CD4-positive, alpha-beta T cell (primary cell): ENCODE measurements at regions of chr17 and their contacts with region 1.

Region 1: DNA sequence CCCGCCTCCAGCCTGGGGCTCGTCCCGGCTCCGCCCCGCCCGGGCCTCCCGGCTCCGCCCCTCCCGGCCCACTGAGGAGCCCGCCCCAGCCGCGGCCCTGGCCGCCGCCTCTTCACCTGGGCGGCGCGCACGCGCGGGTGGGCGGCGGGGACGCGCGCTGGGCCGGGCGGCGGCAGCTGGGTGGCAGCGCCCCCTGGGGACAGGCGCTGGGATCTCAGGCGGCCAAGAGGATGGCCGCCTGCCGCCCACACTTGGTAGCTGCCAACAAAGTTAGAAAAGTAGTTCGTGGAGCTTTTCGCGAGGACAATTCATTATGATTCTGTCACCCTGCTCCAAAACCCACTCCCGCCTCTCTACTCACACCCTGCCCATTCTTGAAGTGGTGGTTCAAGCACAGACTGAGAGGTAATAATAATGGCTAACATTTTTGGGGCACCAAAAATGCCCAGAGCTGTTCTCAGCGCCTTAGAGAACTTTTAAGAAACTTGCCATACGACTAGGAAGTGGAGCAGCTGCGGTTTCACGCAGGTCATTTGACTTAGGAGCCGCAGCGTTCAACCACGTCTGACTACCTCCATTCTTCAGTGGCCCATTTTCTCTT is 340 bp upstream of the MYO1D start:
- DNase-seq: peak; percentile 81 to 98 (median 92)
- ATAC-seq: peak; percentile 93
- H3K4me3 ChIP-seq: peak overlapping the region; percentile 36
- H3K4me3 Mint-ChIP-seq: peak overlapping the region; percentile 92
- H3K27ac ChIP-seq: peak overlapping the region; percentile 41 to 63
- H3K27ac Mint-ChIP-seq: peak overlapping the region; percentile 80
- H3K4me1 ChIP-seq: peaks cover 11% of the 10 kb centered on the region
- H3K4me1 Mint-ChIP-seq: peaks cover 14% of the 10 kb centered on the region
- H3K27me3 ChIP-seq: no peaks in the 10 kb centered on the region
- H3K27me3 Mint-ChIP-seq: peaks cover 5% of the 10 kb centered on the region
- CTCF ChIP-seq: peak; percentile 69

Region 2: GRCh38 chr17:32341857-32342602 is 535.2 kb before region 1 on chr17 and contains the start of gene C17orf75:
- CTCF ChIA-PET with region 1: no interaction called
- POLR2A ChIA-PET with region 1: no interaction called
- intact Hi-C with region 1: loop called in 1 of 2 experiments (anchors 5 kb)
- DNase-seq: peak; percentile 69 to 87 (median 78)
- ATAC-seq: peak; percentile 92
- H3K4me3 ChIP-seq: peak within 1 kb of the TSS; percentile 67
- H3K4me3 Mint-ChIP-seq: peak within 1 kb of the TSS; percentile 99
- H3K27ac ChIP-seq: peak within 1 kb of the TSS; percentile 58 to 62
- H3K27ac Mint-ChIP-seq: peak within 1 kb of the TSS; percentile 91
- H3K4me1 ChIP-seq: peaks cover 19% of the 10 kb centered on the region
- H3K4me1 Mint-ChIP-seq: peaks cover 28% of the 10 kb centered on the region
- H3K27me3 ChIP-seq: no peaks in the 10 kb centered on the region
- H3K27me3 Mint-ChIP-seq: no peaks in the 10 kb centered on the region
- CTCF ChIP-seq: no peak
- total RNA-seq, gene C17orf75: 12.8 to 15.9 TPM

Region 3: GRCh38 chr17:32444308-32445073 is 432.8 kb before region 1 on chr17 and contains the start of gene PSMD11:
- CTCF ChIA-PET with region 1: interaction called, 17 read pairs
- POLR2A ChIA-PET with region 1: interaction called, 7 read pairs
- intact Hi-C with region 1: loop called in 1 of 2 experiments (anchors 5 kb)
- DNase-seq: peak; percentile 98 to 99 (median 99)
- ATAC-seq: peak; percentile 97
- H3K4me3 ChIP-seq: peak within 1 kb of the TSS; percentile 92
- H3K4me3 Mint-ChIP-seq: peak within 1 kb of the TSS; percentile 90
- H3K27ac ChIP-seq: peak within 1 kb of the TSS; percentile 46 to 63
- H3K27ac Mint-ChIP-seq: peak within 1 kb of the TSS; percentile 18
- H3K4me1 ChIP-seq: peaks cover 17% of the 10 kb centered on the region
- H3K4me1 Mint-ChIP-seq: peaks cover 39% of the 10 kb centered on the region
- H3K27me3 ChIP-seq: no peaks in the 10 kb centered on the region
- H3K27me3 Mint-ChIP-seq: no peaks in the 10 kb centered on the region
- CTCF ChIP-seq: peak; percentile 23
- total RNA-seq, gene PSMD11: 67.6 to 68.7 TPM

Region 4: GRCh38 chr17:32486111-32486700 is 391.1 kb before region 1 on chr17:
- CTCF ChIA-PET with region 1: interaction called, 3 read pairs
- POLR2A ChIA-PET with region 1: interaction called, 3 read pairs
- intact Hi-C with region 1: loop called (anchors 10 kb)
- DNase-seq: peak; percentile 51 to 93 (median 68)
- ATAC-seq: peak; percentile 72
- H3K4me3 ChIP-seq: peak overlapping the region; percentile 38
- H3K4me3 Mint-ChIP-seq: peak overlapping the region; percentile 90
- H3K27ac ChIP-seq: peak overlapping the region; percentile 21
- H3K27ac Mint-ChIP-seq: peak overlapping the region; percentile 62
- H3K4me1 ChIP-seq: peaks cover 42% of the 10 kb centered on the region
- H3K4me1 Mint-ChIP-seq: peaks cover 55% of the 10 kb centered on the region
- H3K27me3 ChIP-seq: no peaks in the 10 kb centered on the region
- H3K27me3 Mint-ChIP-seq: no peaks in the 10 kb centered on the region
- CTCF ChIP-seq: no peak

Region 5: DNA sequence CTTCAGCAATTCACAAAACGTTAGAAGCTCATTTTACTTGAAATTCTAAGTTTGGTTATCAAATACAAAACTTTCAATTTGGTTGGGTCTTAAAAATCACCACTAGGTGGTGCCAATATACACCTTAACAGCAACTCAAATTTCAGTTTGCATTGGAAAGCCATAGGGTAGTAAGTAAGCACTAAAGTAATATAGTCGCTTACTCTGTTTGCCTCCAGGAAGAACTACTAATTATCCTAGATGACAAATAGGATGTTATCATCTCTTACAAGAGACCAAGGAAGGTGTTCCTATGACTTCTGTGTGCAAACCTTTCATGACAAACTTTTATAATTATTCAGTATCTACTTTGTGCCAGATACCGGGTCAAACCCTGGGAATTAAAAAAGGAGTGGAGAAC is 93.7 kb before region 1 on chr17:
- CTCF ChIA-PET with region 1: interaction called, 79 read pairs
- POLR2A ChIA-PET with region 1: interaction called, 13 read pairs
- intact Hi-C with region 1: loop called (anchors 1 kb)
- DNase-seq: peak in 3 of 14 experiments; percentile 64 to 67 (median 67)
- ATAC-seq: peak; percentile 52
- H3K4me3 ChIP-seq: no peak overlapping the region
- H3K4me3 Mint-ChIP-seq: no peak overlapping the region
- H3K27ac ChIP-seq: no peak overlapping the region
- H3K27ac Mint-ChIP-seq: no peak overlapping the region
- H3K4me1 ChIP-seq: no peaks in the 10 kb centered on the region
- H3K4me1 Mint-ChIP-seq: no peaks in the 10 kb centered on the region
- H3K27me3 ChIP-seq: no peaks in the 10 kb centered on the region
- H3K27me3 Mint-ChIP-seq: no peaks in the 10 kb centered on the region
- CTCF ChIP-seq: peak; percentile 86

Region 6: DNA sequence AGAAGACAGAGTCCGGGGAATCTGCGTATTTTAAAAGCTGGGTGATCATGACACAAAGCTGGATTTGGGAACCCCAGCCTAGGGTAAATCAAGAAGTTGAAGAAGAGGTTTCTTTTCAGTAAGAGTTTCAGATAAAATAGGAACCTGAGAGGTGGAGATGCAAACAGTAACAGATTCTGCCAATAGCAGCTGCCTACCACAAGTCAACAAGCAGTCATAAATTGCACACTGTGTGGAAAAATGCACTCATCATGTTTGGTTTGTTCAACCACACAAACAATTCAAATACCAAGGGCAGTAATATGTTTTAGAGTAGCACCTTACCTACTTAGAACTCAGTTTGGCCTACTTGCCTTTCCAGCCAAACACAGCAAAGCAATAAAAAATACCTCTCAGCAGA is 14.3 kb before region 1 on chr17:
- CTCF ChIA-PET with region 1: interaction called, 12 read pairs
- POLR2A ChIA-PET with region 1: no interaction called
- intact Hi-C with region 1: no loop called
- DNase-seq: no peak
- ATAC-seq: no peak
- H3K4me3 ChIP-seq: no peak overlapping the region
- H3K4me3 Mint-ChIP-seq: no peak overlapping the region
- H3K27ac ChIP-seq: no peak overlapping the region
- H3K27ac Mint-ChIP-seq: no peak overlapping the region
- H3K4me1 ChIP-seq: no peaks in the 10 kb centered on the region
- H3K4me1 Mint-ChIP-seq: no peaks in the 10 kb centered on the region
- H3K27me3 ChIP-seq: no peaks in the 10 kb centered on the region
- H3K27me3 Mint-ChIP-seq: peaks cover 15% of the 10 kb centered on the region
- CTCF ChIP-seq: no peak